ENCODE measurements at regions of chr15 and their contacts with region 1.

Region 1: DNA sequence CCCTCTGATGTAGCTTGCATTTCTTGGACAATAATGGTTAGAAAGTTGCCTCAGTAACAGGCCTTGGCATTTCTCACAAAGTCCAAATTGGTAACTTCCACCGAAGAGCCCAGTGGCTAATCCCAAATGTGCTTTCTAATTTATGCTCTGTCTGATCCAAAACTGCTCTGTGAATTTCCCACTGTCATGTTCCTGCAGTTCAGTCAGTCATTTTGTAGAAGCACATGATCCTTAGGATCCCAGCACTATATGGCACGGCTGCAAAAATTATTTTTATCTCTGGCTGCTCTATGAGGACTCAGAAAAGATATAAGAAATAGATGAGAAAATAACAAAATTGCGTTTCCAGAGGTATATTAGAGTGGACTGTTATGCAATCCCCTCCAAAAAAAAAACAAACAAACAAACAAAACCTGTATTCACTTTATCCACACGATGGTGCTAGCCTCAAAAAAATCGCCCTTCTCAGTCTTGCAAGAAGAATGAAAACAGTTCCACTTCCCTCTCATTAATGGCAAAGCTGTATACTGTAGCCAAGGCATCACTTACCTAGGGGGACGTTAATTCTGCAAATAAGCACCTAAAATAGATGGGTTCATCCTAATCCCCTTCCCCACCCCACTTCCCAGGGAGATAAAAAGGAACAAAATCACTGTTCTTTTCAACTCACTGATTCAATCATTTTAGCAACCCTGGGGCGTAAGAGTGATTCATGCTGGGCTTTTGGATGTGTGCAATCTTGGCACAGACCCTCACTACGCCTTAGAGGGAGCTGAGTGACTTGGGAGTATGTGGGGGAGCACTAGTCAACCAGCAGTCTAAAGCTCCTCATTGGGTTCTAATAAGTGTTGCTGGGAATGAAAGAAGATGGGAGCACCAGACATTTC is 61.3 kb downstream of the TMCO5A start:
- DNase-seq: peak; percentile 61
- H3K4me3 Mint-ChIP-seq: no peak overlapping the region
- H3K27ac Mint-ChIP-seq: no peak overlapping the region
- H3K4me1 Mint-ChIP-seq: no peaks in the 10 kb centered on the region
- H3K27me3 Mint-ChIP-seq: peaks cover 4% of the 10 kb centered on the region

Region 2: DNA sequence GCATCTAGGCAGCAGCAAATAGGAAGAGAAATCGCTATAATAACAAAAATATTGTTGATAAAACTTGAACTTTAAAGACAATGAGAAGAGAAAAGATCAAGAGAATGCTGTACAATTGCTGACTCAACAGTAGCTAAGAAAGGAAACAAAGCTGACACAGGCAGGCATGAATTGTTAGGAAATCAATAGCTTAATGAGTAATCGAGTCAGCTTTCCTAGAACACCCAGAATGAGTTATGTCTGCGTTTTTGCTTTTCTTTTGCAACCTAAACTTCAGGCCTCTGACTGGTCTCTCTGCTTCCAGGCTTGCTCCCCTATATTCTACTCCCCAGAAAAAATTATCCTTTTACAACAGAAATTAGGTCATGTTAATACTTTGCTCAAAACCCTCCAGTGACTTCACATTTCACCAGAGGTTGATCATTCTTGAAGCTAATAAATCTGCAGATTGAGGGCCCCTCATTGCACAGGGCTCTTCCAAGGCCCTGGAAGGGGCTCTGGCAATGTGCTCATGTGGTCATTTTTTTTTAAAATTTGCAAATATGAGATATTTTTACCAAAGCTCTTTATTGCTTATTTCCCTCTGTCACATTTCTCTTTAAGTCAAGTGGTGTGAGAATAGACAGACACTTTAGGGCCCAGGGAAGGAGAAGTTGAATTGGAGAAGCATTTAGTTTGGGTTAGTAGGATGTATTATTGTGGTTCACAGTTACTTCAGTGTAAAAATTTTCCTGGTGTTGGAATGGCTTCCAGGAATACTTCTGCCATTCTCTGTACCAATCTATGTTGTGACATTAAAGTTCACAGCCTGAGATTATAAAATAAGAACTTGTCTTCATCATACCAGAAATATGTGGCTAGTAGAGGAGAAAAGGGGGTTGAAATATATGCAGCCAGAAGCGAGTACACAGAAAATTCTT is 55.1 kb after region 1 on chr15:
- intact Hi-C with region 1: no loop called
- DNase-seq: no peak
- H3K4me3 Mint-ChIP-seq: no peak overlapping the region
- H3K27ac Mint-ChIP-seq: no peak overlapping the region
- H3K4me1 Mint-ChIP-seq: no peaks in the 10 kb centered on the region
- H3K27me3 Mint-ChIP-seq: peaks cover 5% of the 10 kb centered on the region

Region 3: DNA sequence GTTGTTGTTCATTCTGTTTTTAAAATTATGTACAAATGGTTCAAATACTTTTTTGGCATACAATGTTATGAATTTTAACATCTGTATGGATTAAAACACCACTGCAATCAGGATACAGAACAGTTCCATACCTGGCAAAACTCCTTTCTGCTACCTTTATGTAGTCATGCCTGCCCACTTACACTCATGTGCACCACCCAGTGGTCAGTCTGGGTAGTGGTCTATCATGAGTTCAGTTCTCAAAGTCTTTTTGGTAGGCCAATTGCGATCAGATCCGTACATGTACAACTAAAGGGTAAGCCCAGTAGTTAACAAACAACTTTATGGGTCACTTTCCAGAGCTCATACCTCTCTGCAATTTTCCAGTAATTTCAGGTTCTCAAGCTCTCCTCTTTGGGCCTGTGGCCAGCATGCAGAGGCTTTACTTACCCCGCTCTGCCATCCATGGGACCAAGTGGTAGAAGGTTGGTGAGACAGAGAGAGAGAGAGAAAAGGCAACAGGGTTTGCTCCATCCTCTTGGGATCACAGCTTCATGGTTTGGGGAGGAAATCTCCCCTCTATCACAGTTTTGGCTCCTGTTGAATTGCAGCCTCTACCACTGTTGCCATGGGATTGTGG is 394.3 kb after region 1 on chr15:
- intact Hi-C with region 1: loop called (anchors 5 kb)
- DNase-seq: peak; percentile 89
- H3K4me3 Mint-ChIP-seq: no peak overlapping the region
- H3K27ac Mint-ChIP-seq: no peak overlapping the region
- H3K4me1 Mint-ChIP-seq: no peaks in the 10 kb centered on the region
- H3K27me3 Mint-ChIP-seq: peaks cover 41% of the 10 kb centered on the region